RWPE1 (cell line): ENCODE measurements at regions of chr15 and their contacts with region 1.

Region 1: DNA sequence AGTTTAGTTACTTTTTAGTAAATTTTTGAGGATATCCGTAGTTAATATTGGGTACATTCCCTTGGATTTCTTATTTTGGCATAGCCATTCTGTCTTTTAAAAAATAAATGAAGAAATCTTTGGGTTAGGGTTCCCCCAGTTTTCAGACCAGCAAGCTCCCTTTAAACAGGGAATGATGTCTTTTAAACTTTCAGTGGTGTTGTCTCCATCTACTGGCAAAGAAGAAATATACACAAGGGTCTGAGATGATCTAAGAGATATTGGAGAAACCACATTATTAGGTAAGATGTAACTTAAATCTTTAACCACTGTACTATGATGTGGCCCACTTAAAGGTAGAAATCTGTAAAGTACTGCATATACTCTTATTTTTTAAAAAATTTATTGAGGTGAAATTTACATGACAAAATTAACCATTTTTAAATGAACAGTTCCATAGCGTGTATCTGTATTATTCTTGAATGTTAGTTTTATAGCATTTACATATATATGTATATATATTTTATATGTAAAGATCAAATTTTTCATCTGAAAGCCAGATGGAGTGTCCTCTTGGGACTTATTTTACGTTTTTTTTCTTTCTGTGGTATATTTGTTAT is 35.1 kb upstream of the EIF3J start:
- DNase-seq: peak; percentile 51
- H3K27ac ChIP-seq: no peak overlapping the region
- CTCF ChIP-seq: peak; percentile 80

Region 2: DNA sequence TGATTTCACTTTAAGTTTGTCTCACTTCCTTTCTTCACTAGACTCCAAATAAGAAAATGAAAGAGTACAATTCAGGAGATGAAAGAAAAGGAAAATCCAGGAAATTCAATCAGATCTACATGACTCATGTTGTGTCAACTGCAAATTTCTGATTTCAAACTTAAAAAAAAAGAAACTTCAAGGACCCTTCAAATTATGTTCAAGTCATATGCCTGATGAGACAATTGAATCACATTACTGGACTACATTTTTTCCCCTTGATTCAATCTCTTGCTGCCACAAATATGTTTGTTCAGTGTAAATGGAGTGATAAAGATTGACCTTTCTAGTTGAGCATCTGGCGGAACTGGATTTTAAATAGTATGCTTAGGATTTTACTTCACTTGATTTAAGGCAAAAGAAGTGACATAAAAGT is 344.2 kb before region 1 on chr15:
- CTCF ChIA-PET with region 1: no interaction called
- POLR2A ChIA-PET with region 1: no interaction called
- DNase-seq: peak; percentile 63
- H3K27ac ChIP-seq: no peak overlapping the region
- CTCF ChIP-seq: no peak

Region 3: DNA sequence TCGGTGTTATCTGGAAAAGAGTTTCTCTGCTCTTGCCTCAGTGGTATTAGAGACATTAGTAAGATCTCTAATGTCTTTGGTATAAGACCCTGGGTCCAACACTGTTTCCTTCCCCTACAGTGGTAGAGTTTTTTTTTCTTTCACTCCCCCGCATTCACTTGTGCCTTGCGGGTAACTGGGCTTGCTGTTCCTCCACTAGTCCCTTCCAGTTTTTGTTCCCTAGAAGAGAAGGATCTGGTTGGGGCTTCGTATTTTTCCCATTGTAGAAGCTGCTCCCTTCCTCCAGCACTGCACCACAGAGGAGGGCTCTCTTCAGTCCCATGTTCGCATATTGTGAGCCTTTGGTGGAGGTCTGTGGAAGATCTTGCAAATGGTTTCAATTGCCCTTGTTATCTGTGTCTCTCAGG is 60.8 kb before region 1 on chr15:
- CTCF ChIA-PET with region 1: no interaction called
- POLR2A ChIA-PET with region 1: interaction called, 11 read pairs
- DNase-seq: no peak
- H3K27ac ChIP-seq: no peak overlapping the region
- CTCF ChIP-seq: no peak

Region 4: DNA sequence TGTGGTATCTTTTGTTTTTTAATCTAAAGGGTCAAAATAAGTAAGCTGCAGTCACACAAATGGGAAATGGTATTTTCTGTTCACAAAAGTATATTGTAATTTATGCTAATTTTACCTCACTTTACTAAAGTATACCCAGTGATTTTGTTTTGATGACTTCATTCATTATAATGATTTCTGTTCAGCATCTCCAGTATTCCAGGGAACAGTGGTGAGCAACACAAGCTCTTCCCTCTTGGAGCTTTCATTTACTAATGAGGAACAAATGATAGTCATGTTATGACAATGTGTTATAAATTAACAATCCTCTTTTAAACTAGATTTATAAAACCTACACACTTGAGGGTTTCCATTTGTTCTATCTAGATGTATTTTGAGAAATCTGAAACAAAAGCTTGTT is 14.6 kb after region 1 on chr15:
- CTCF ChIA-PET with region 1: no interaction called
- POLR2A ChIA-PET with region 1: no interaction called
- DNase-seq: no peak
- H3K27ac ChIP-seq: no peak overlapping the region
- CTCF ChIP-seq: no peak